HCT116 (cell line): ENCODE measurements at regions of chr1 and their contacts with region 1.

Region 1: GRCh38 chr1:27097484-27097917 is 57.4 kb downstream of the SLC9A1 start:
- DNase-seq: peak; percentile 45
- ATAC-seq: peak; percentile 87
- H3K4me3 ChIP-seq: no peak overlapping the region
- H3K27ac ChIP-seq: no peak overlapping the region
- H3K4me1 ChIP-seq: peaks cover 9 to 29% of the 10 kb centered on the region in 2 experiments
- H3K27me3 ChIP-seq: no peaks in the 10 kb centered on the region
- CTCF ChIP-seq: peak; percentile 95 to 97 (median 96)
- POLR2A ChIP-seq: no peak
- RAD21 ChIP-seq: peak; percentile 96

Region 2: DNA sequence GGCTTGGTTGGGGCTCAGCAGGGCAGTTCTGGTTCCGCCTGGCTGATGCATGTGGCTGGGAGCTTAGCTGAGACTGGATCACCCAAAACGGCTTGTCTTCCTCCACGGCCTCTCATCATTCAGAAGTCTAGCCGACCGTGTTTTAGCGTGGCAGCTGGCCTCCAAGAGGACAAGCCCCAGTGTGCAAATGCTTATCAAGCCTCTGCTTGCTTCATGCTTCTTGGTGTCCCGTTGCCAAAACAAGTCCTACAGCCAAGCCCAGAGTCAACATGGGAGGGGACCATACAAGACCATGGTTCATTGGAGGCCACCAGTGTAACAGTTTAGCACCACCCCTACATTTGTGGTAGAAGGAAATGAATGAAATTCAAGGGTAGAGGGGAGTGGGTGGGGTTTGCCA is 126.7 kb before region 1 on chr1:
- CTCF ChIA-PET with region 1: interaction called, 17 read pairs
- POLR2A ChIA-PET with region 1: no interaction called
- RAD21 ChIA-PET with region 1: interaction called in 1 of 2 experiments, 11 read pairs
- intact Hi-C with region 1: loop called (anchors 1 kb)
- DNase-seq: no peak
- ATAC-seq: no peak
- H3K4me3 ChIP-seq: no peak overlapping the region
- H3K27ac ChIP-seq: no peak overlapping the region
- H3K4me1 ChIP-seq: peaks cover 6 to 48% of the 10 kb centered on the region in 2 experiments; a peak in 3 of 4 replicates
- H3K27me3 ChIP-seq: no peaks in the 10 kb centered on the region
- CTCF ChIP-seq: no peak
- POLR2A ChIP-seq: no peak
- RAD21 ChIP-seq: no peak

Region 3: GRCh38 chr1:27086026-27086425 is 11.5 kb before region 1 on chr1:
- CTCF ChIA-PET with region 1: no interaction called
- POLR2A ChIA-PET with region 1: no interaction called
- RAD21 ChIA-PET with region 1: no interaction called
- intact Hi-C with region 1: no loop called
- DNase-seq: no peak
- ATAC-seq: no peak
- H3K4me3 ChIP-seq: no peak overlapping the region
- H3K27ac ChIP-seq: no peak overlapping the region
- H3K4me1 ChIP-seq: no peaks in the 10 kb centered on the region
- H3K27me3 ChIP-seq: no peaks in the 10 kb centered on the region
- CTCF ChIP-seq: no peak
- POLR2A ChIP-seq: no peak
- RAD21 ChIP-seq: no peak